Activated B cell treated with CpG ODN at 0.5 μM for 24 hours (primary cell): ENCODE measurements at regions of chr12 and their contacts with region 1.

Region 1: GRCh38 chr12:19186722-19187661 is 57.5 kb downstream of the PLEKHA5 start:
- DNase-seq: no peak
- ATAC-seq: no peak
- H3K4me3 Mint-ChIP-seq: no peak overlapping the region
- H3K27ac Mint-ChIP-seq: no peak overlapping the region
- H3K4me1 Mint-ChIP-seq: no peaks in the 10 kb centered on the region
- H3K27me3 Mint-ChIP-seq: no peaks in the 10 kb centered on the region
- CTCF ChIP-seq: no peak

Region 2: GRCh38 chr12:18139989-18140596 is 1046.9 kb before region 1 on chr12:
- CTCF ChIA-PET with region 1: no interaction called
- POLR2A ChIA-PET with region 1: no interaction called
- intact Hi-C with region 1: loop called (anchors 2 kb)
- DNase-seq: no peak
- ATAC-seq: no peak
- H3K4me3 Mint-ChIP-seq: no peak overlapping the region
- H3K27ac Mint-ChIP-seq: no peak overlapping the region
- H3K4me1 Mint-ChIP-seq: peaks cover 5% of the 10 kb centered on the region
- H3K27me3 Mint-ChIP-seq: no peaks in the 10 kb centered on the region
- CTCF ChIP-seq: no peak

Region 3: GRCh38 chr12:18158774-18159557 is 1028.0 kb before region 1 on chr12:
- CTCF ChIA-PET with region 1: no interaction called
- POLR2A ChIA-PET with region 1: no interaction called
- intact Hi-C with region 1: loop called (anchors 5 kb)
- DNase-seq: no peak
- ATAC-seq: no peak
- H3K4me3 Mint-ChIP-seq: no peak overlapping the region
- H3K27ac Mint-ChIP-seq: no peak overlapping the region
- H3K4me1 Mint-ChIP-seq: no peaks in the 10 kb centered on the region
- H3K27me3 Mint-ChIP-seq: no peaks in the 10 kb centered on the region
- CTCF ChIP-seq: no peak

Region 4: GRCh38 chr12:18250313-18250916 is 936.6 kb before region 1 on chr12:
- CTCF ChIA-PET with region 1: no interaction called
- POLR2A ChIA-PET with region 1: no interaction called
- intact Hi-C with region 1: loop called (anchors 2 kb)
- DNase-seq: no peak
- ATAC-seq: no peak
- H3K4me3 Mint-ChIP-seq: no peak overlapping the region
- H3K27ac Mint-ChIP-seq: no peak overlapping the region
- H3K4me1 Mint-ChIP-seq: no peaks in the 10 kb centered on the region
- H3K27me3 Mint-ChIP-seq: no peaks in the 10 kb centered on the region
- CTCF ChIP-seq: no peak

Region 5: DNA sequence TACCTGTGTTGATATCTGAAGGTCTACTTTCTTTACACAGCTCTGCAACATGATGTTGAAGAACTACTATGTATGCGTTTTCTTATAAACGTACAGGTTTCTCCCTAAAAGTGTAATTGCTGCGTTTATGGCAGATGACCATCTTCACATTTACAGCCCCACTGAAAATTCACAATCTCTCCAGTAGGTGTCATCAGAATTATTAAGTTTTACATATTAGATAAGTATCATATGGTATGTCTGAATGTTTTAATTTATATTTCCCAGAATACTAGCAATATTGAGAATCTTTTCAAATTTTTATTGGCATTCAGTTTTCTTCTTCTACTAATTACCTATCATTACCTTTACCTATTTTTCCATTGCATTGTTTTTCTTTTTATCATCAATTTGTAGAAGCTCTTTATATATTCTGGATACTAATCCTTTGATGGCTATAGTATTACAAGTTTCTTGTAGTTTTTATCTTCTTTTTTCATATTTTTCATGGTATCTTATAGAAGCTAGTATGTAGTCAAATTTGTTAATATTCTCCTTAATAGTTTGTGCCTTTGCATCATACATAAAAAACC is 325.6 kb before region 1 on chr12:
- CTCF ChIA-PET with region 1: no interaction called
- POLR2A ChIA-PET with region 1: no interaction called
- intact Hi-C with region 1: loop called (anchors 1 kb)
- DNase-seq: no peak
- ATAC-seq: no peak
- H3K4me3 Mint-ChIP-seq: no peak overlapping the region
- H3K27ac Mint-ChIP-seq: no peak overlapping the region
- H3K4me1 Mint-ChIP-seq: no peaks in the 10 kb centered on the region
- H3K27me3 Mint-ChIP-seq: no peaks in the 10 kb centered on the region
- CTCF ChIP-seq: no peak

Region 6: GRCh38 chr12:19491863-19492262 is 304.9 kb after region 1 on chr12:
- CTCF ChIA-PET with region 1: no interaction called
- POLR2A ChIA-PET with region 1: no interaction called
- intact Hi-C with region 1: no loop called
- DNase-seq: no peak
- ATAC-seq: no peak
- H3K4me3 Mint-ChIP-seq: no peak overlapping the region
- H3K27ac Mint-ChIP-seq: no peak overlapping the region
- H3K4me1 Mint-ChIP-seq: peaks cover 18% of the 10 kb centered on the region
- H3K27me3 Mint-ChIP-seq: no peaks in the 10 kb centered on the region
- CTCF ChIP-seq: no peak